ENCODE measurements at regions of chr1 and their contacts with region 1.

Region 1: DNA sequence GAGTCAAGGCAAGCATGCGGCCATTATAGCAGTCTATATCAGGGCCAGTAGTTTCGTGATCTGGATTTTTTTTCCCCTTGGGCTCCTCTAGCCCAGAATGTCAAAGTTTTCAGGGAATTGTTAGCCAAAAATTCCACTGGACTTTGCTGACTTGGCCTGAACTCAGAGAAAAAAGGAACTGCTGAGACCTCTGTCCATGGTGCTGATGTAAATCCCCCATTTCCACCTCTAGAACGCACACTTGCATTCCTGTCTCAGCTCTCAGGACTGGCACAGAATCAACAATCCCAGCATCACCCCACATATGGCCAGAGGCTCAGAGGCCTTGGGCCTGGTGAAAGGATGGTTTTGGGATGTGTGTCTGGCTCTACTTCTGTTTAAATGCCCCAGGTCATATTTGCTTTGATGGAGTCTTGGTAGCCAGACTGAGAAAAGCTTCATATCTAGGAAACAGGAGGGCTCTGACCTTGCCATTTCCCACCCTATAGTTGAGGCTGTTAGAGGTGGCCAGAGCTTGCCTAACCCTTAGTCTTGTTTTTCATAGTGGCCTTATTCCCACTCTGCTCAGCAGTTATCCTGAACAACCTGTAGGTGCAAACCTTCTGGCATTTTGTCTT is 16.9 kb upstream of the EFCAB14 start:
- DNase-seq: peak; percentile 52
- ATAC-seq: peak; percentile 73
- H3K4me3 ChIP-seq: no peak overlapping the region
- H3K27ac ChIP-seq: no peak overlapping the region
- H3K4me1 ChIP-seq: no peaks in the 10 kb centered on the region
- H3K27me3 ChIP-seq: no peaks in the 10 kb centered on the region; a peak in 1 of 5 replicates
- CTCF ChIP-seq: peak; percentile 67
- EP300 ChIP-seq: no peak
- POLR2A ChIP-seq: no peak
- RAD21 ChIP-seq: no peak

Region 2: GRCh38 chr1:47690341-47691250 is 954.8 kb after region 1 on chr1:
- CTCF ChIA-PET with region 1: no interaction called
- POLR2A ChIA-PET with region 1: no interaction called
- in situ Hi-C with region 1: no loop called
- intact Hi-C with region 1: loop called (anchors 5 kb)
- DNase-seq: no peak
- ATAC-seq: no peak
- H3K4me3 ChIP-seq: no peak overlapping the region
- H3K27ac ChIP-seq: no peak overlapping the region
- H3K4me1 ChIP-seq: no peaks in the 10 kb centered on the region
- H3K27me3 ChIP-seq: peaks cover 8 to 56% of the 10 kb centered on the region in 2 experiments; a peak in 4 of 5 replicates
- CTCF ChIP-seq: no peak
- EP300 ChIP-seq: no peak
- POLR2A ChIP-seq: no peak
- RAD21 ChIP-seq: no peak

Measured in HepG2 (cell line).